CD8-positive, alpha-beta T cell (primary cell): ENCODE measurements at regions of chr18 and their contacts with region 1.

Region 1: DNA sequence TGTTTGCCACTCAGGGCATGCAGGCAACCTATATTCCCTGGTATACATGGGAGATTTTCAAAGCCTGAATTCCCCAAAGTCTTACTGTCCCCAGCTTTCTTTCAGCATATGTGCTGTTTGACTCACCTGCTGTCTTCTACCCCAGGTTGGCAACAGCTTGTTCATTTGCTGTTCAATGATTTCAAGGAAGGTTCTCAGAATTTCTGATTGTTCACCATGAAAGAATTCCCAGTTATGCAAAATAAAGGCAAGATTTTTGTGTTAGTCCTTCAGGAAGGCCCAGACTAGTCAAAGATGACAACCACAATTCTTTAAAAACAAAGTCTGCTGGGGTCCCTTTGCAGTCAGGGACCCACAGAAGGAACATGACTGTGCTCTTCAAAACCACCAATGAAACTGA is 1057.8 kb upstream of the CDH2 start:
- DNase-seq: no peak
- ATAC-seq: no peak
- H3K4me3 ChIP-seq: no peak overlapping the region
- H3K4me3 Mint-ChIP-seq: no peak overlapping the region
- H3K27ac ChIP-seq: no peak overlapping the region
- H3K27ac Mint-ChIP-seq: no peak overlapping the region
- H3K4me1 ChIP-seq: no peaks in the 10 kb centered on the region
- H3K4me1 Mint-ChIP-seq: no peaks in the 10 kb centered on the region
- H3K27me3 ChIP-seq: no peaks in the 10 kb centered on the region
- H3K27me3 Mint-ChIP-seq: no peaks in the 10 kb centered on the region
- CTCF ChIP-seq: no peak

Region 2: DNA sequence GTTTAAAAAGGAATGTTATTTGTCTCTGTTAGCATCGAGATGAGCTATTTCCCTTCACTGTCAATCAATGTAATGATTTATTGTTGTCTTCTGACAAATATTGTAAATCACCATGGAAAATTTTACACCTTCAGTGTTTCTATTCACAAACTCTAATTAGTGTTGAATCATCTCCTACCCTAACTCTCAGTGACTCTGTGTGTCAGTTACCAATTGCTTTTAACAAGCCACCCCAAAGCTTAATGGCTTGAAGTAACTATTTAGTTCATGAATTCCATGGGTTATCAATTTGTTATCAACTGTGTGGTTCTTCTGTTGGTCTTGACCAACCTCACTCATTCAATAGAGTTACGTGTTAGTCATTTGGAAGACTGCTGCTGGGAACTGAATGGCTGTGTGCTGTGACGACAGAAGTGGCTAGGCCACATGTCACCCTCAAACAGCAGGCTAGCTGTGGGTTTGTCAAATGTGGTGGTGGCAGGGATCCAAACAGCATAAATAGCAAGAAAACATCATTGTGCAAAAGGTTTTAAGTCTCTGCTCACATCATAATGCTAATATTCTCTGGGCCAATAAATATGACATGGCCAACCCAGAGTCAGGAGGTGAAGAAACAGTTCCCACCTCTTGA is 147.0 kb before region 1 on chr18:
- CTCF ChIA-PET with region 1: no interaction called
- POLR2A ChIA-PET with region 1: no interaction called
- intact Hi-C with region 1: no loop called
- DNase-seq: peak in 4 of 9 experiments; percentile 1 to 32 (median 14)
- ATAC-seq: no peak
- H3K4me3 ChIP-seq: no peak overlapping the region
- H3K4me3 Mint-ChIP-seq: no peak overlapping the region
- H3K27ac ChIP-seq: no peak overlapping the region
- H3K27ac Mint-ChIP-seq: no peak overlapping the region
- H3K4me1 ChIP-seq: no peaks in the 10 kb centered on the region
- H3K4me1 Mint-ChIP-seq: no peaks in the 10 kb centered on the region
- H3K27me3 ChIP-seq: no peaks in the 10 kb centered on the region
- H3K27me3 Mint-ChIP-seq: no peaks in the 10 kb centered on the region
- CTCF ChIP-seq: no peak

Region 3: GRCh38 chr18:29104671-29105070 is 130.1 kb before region 1 on chr18:
- CTCF ChIA-PET with region 1: no interaction called
- POLR2A ChIA-PET with region 1: no interaction called
- intact Hi-C with region 1: loop called in 1 of 2 experiments (anchors 10 kb)
- DNase-seq: no peak
- ATAC-seq: no peak
- H3K4me3 ChIP-seq: no peak overlapping the region
- H3K4me3 Mint-ChIP-seq: no peak overlapping the region
- H3K27ac ChIP-seq: no peak overlapping the region
- H3K27ac Mint-ChIP-seq: no peak overlapping the region
- H3K4me1 ChIP-seq: no peaks in the 10 kb centered on the region
- H3K4me1 Mint-ChIP-seq: no peaks in the 10 kb centered on the region
- H3K27me3 ChIP-seq: no peaks in the 10 kb centered on the region
- H3K27me3 Mint-ChIP-seq: no peaks in the 10 kb centered on the region
- CTCF ChIP-seq: no peak

Region 4: GRCh38 chr18:29259838-29260237 is 25.1 kb after region 1 on chr18:
- CTCF ChIA-PET with region 1: no interaction called
- POLR2A ChIA-PET with region 1: no interaction called
- intact Hi-C with region 1: loop called in 1 of 2 experiments (anchors 2 kb)
- DNase-seq: no peak
- ATAC-seq: no peak
- H3K4me3 ChIP-seq: no peak overlapping the region
- H3K4me3 Mint-ChIP-seq: no peak overlapping the region
- H3K27ac ChIP-seq: no peak overlapping the region
- H3K27ac Mint-ChIP-seq: no peak overlapping the region
- H3K4me1 ChIP-seq: no peaks in the 10 kb centered on the region
- H3K4me1 Mint-ChIP-seq: no peaks in the 10 kb centered on the region
- H3K27me3 ChIP-seq: no peaks in the 10 kb centered on the region
- H3K27me3 Mint-ChIP-seq: no peaks in the 10 kb centered on the region
- CTCF ChIP-seq: no peak

Region 5: GRCh38 chr18:29285471-29285870 is 50.7 kb after region 1 on chr18:
- CTCF ChIA-PET with region 1: no interaction called
- POLR2A ChIA-PET with region 1: no interaction called
- intact Hi-C with region 1: loop called in 1 of 2 experiments (anchors 10 kb)
- DNase-seq: peak in 1 of 9 experiments; percentile 0
- ATAC-seq: no peak
- H3K4me3 ChIP-seq: no peak overlapping the region
- H3K4me3 Mint-ChIP-seq: no peak overlapping the region
- H3K27ac ChIP-seq: no peak overlapping the region
- H3K27ac Mint-ChIP-seq: no peak overlapping the region
- H3K4me1 ChIP-seq: no peaks in the 10 kb centered on the region
- H3K4me1 Mint-ChIP-seq: no peaks in the 10 kb centered on the region
- H3K27me3 ChIP-seq: no peaks in the 10 kb centered on the region
- H3K27me3 Mint-ChIP-seq: no peaks in the 10 kb centered on the region
- CTCF ChIP-seq: no peak